Aorta (tissue), 5 donors: ENCODE measurements at regions of chrX and their contacts with region 1.

Region 1: DNA sequence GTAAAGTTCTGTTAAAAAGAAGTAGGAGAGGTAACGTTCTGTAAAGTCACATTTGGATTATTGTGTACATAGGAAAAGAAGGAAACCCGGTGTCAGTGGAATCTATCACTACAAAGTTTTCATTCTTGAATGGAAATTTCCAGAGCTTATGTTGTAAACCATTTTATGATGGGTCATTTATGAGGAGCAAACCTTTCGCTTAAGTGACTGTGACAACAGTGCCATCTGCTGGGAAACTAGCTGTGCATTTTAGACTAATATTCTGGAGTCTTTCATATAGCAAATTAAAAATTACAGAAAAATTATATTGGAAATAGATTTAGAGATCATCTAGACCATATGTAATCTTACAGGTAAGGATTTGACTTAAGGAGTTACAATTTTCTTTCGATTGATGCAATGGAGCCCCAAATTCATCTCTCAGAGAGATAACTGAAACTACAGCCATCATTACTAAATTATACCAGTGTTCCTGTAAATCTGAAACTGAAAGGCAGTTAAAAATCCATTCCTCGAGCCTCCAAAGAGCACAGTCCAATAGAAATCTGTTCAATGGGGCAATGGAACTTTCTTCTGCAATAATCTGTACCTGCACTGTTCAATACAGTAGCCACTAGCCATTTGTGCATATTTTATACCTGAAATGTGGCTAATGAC is 26.9 kb downstream of the ASB9 start:
- DNase-seq: no peak
- ATAC-seq: no peak
- H3K4me3 ChIP-seq: no peak overlapping the region
- H3K27ac ChIP-seq: no peak overlapping the region
- H3K4me1 ChIP-seq: no peaks in the 10 kb centered on the region
- H3K27me3 ChIP-seq: no peaks in the 10 kb centered on the region

Region 2: GRCh38 chrX:14039344-14039743 is 1203.7 kb before region 1 on chrX:
- intact Hi-C with region 1: loop called (anchors 5 kb)
- DNase-seq: no peak
- ATAC-seq: no peak
- H3K4me3 ChIP-seq: no peak overlapping the region
- H3K27ac ChIP-seq: no peak overlapping the region
- H3K4me1 ChIP-seq: no peaks in the 10 kb centered on the region
- H3K27me3 ChIP-seq: no peaks in the 10 kb centered on the region

Region 3: GRCh38 chrX:14729058-14729457 is 514.0 kb before region 1 on chrX:
- intact Hi-C with region 1: no loop called
- DNase-seq: no peak
- ATAC-seq: no peak
- H3K4me3 ChIP-seq: no peak overlapping the region
- H3K27ac ChIP-seq: no peak overlapping the region
- H3K4me1 ChIP-seq: no peaks in the 10 kb centered on the region
- H3K27me3 ChIP-seq: no peaks in the 10 kb centered on the region